Activated B cell treated with CpG ODN at 0.5 μM for 24 hours (primary cell): ENCODE measurements at regions of chr13 and their contacts with region 1.

Region 1: DNA sequence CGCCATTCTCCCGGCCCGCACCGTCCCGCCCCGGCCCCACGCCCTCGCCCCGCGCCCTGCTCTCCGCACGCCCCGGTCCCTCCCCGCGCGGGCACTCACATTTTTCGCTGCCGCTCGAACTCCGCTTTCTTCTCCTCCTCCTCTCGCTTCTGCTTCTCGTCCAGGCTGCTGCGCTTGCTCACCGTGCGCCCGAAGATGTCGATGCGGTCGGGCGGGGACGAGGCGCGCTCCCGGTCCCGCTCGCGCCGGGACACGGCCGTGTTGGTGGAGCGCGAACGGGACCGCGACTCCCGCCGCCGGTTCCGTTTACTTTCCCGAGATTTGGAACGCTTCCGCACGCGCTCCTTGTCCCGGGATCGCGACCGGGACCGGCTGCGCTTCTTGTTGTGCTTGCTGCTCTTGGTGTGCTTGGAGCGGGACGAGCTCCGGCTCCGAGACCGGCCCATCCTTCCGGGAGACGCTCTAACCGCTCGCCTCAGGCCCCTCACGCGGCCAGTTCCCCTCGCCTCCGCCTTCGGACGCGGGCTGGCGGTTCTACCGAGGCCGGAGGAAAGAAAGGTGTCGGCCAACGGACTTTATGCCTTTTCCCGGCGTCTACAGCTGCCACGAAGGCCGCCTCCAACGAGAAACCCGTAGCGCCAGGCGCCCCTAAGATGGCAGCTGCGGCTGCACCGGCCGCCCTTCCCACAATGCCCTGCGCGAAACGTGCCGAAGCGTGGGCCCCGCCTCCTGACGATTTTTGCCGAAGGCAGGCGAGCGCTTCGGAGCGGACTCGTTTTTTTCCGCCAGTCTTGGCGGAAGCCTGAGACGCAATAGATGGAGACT is at the start of gene ARGLU1:
- DNase-seq: peak; percentile 97
- ATAC-seq: peak; percentile 83
- H3K4me3 Mint-ChIP-seq: peak within 1 kb of the TSS; percentile 88
- H3K27ac Mint-ChIP-seq: peak within 1 kb of the TSS; percentile 93
- H3K4me1 Mint-ChIP-seq: peaks cover 53% of the 10 kb centered on the region
- H3K27me3 Mint-ChIP-seq: no peaks in the 10 kb centered on the region
- CTCF ChIP-seq: no peak
- total RNA-seq, gene ARGLU1: 108 and 112 TPM in 2 replicates

Region 2: GRCh38 chr13:105139380-105140285 is 1428.1 kb before region 1 on chr13:
- CTCF ChIA-PET with region 1: no interaction called
- POLR2A ChIA-PET with region 1: interaction called, 5 read pairs
- intact Hi-C with region 1: loop called (anchors 10 kb)
- DNase-seq: peak; percentile 26
- ATAC-seq: peak; percentile 94
- H3K4me3 Mint-ChIP-seq: peak overlapping the region; percentile 91
- H3K27ac Mint-ChIP-seq: peak overlapping the region; percentile 95
- H3K4me1 Mint-ChIP-seq: peaks cover 19% of the 10 kb centered on the region
- H3K27me3 Mint-ChIP-seq: no peaks in the 10 kb centered on the region
- CTCF ChIP-seq: no peak

Region 3: GRCh38 chr13:106548064-106548696 is 19.5 kb before region 1 on chr13:
- CTCF ChIA-PET with region 1: no interaction called
- POLR2A ChIA-PET with region 1: interaction called, 3 read pairs
- intact Hi-C with region 1: loop called (anchors 2 kb)
- DNase-seq: no peak
- ATAC-seq: no peak
- H3K4me3 Mint-ChIP-seq: no peak overlapping the region
- H3K27ac Mint-ChIP-seq: no peak overlapping the region
- H3K4me1 Mint-ChIP-seq: peaks cover 5% of the 10 kb centered on the region
- H3K27me3 Mint-ChIP-seq: no peaks in the 10 kb centered on the region
- CTCF ChIP-seq: no peak

Region 4: GRCh38 chr13:106917673-106918556 is 350.2 kb after region 1 on chr13:
- CTCF ChIA-PET with region 1: no interaction called
- POLR2A ChIA-PET with region 1: no interaction called
- intact Hi-C with region 1: loop called (anchors 5 kb)
- DNase-seq: peak; percentile 56
- ATAC-seq: peak; percentile 79
- H3K4me3 Mint-ChIP-seq: peak overlapping the region; percentile 81
- H3K27ac Mint-ChIP-seq: no peak overlapping the region
- H3K4me1 Mint-ChIP-seq: peaks cover 24% of the 10 kb centered on the region
- H3K27me3 Mint-ChIP-seq: peaks cover 19% of the 10 kb centered on the region
- CTCF ChIP-seq: no peak

Region 5: GRCh38 chr13:108218044-108218974 is 1650.6 kb after region 1 on chr13 and contains the start of gene ABHD13:
- CTCF ChIA-PET with region 1: no interaction called
- POLR2A ChIA-PET with region 1: no interaction called
- intact Hi-C with region 1: loop called (anchors 5 kb)
- DNase-seq: peak; percentile 92
- ATAC-seq: peak; percentile 62
- H3K4me3 Mint-ChIP-seq: peak within 1 kb of the TSS; percentile 96
- H3K27ac Mint-ChIP-seq: peak within 1 kb of the TSS; percentile 96
- H3K4me1 Mint-ChIP-seq: peaks cover 70% of the 10 kb centered on the region
- H3K27me3 Mint-ChIP-seq: no peaks in the 10 kb centered on the region
- CTCF ChIP-seq: no peak
- total RNA-seq, gene ABHD13: 9.4 and 10.9 TPM in 2 replicates